Activated T-helper 2 cell treated with anti-CD3 and anti-CD28 coated beads, Interferon-gamma antibody, Interleukin-2, Interleukin-4, amounts not matched to agents 10 μg/mL and 5 μg/mL and 100 μg/mL, durations not matched to agents 14 hours and 24 hours and 36 hours (primary cell): ENCODE measurements at regions of chr2 and their contacts with region 1.

Region 1: GRCh38 chr2:19901442-19902215 is at the start of gene TTC32:
- DNase-seq: peak; percentile 90
- H3K4me3 Mint-ChIP-seq: peak within 1 kb of the TSS; percentile 89
- H3K27ac Mint-ChIP-seq: peak within 1 kb of the TSS; percentile 95
- H3K4me1 Mint-ChIP-seq: peaks cover 48% of the 10 kb centered on the region
- H3K27me3 Mint-ChIP-seq: peaks cover 2% of the 10 kb centered on the region
- total RNA-seq, gene TTC32: 14.8 TPM in 2 replicates

Region 2: DNA sequence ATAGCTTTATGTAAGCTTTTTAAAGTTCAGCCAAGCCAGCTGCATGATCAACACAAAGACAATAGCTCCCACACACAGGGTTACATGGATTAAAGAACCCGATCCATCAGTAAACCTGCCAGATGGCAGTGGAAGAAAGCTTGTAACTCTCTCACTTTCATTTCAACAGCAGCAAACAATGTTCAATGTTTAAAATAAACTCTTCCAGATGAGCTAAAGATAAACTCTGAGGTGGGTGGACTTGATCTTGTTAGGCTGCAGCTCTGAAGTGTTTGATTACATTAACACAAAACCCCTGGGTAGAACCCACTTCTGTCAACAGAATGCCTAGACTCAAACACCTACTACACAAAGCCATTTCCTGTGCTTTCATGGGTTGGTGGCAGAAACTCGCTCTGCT is 1355.1 kb before region 1 on chr2:
- intact Hi-C with region 1: loop called (anchors 5 kb)
- DNase-seq: no peak
- H3K4me3 Mint-ChIP-seq: no peak overlapping the region
- H3K27ac Mint-ChIP-seq: peak overlapping the region; percentile 76
- H3K4me1 Mint-ChIP-seq: peaks cover 33% of the 10 kb centered on the region
- H3K27me3 Mint-ChIP-seq: no peaks in the 10 kb centered on the region

Region 3: GRCh38 chr2:19347619-19348562 is 553.7 kb before region 1 on chr2:
- intact Hi-C with region 1: loop called (anchors 5 kb)
- DNase-seq: peak; percentile 97
- H3K4me3 Mint-ChIP-seq: peak overlapping the region; percentile 96
- H3K27ac Mint-ChIP-seq: peak overlapping the region; percentile 93
- H3K4me1 Mint-ChIP-seq: peaks cover 20% of the 10 kb centered on the region
- H3K27me3 Mint-ChIP-seq: peaks cover 33% of the 10 kb centered on the region

Region 4: DNA sequence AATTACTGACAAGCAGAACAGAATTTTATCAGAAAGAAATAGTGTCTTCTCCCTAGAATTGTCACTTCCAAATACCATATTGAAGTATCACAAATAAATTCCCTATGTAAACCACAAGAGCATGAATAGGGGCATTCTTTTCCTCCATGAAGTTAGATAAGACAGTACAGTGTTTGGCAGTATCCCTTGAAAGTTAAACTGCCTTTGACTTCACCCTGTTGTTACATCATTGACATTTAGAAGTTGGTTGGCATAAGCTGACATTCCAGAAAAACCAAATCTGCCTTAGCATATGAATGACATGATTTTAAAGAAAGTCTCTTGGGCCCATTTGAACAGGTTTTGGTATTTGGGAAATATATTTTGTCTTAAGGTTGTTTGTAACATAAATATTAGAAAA is 493.0 kb before region 1 on chr2:
- intact Hi-C with region 1: no loop called
- DNase-seq: no peak
- H3K4me3 Mint-ChIP-seq: no peak overlapping the region
- H3K27ac Mint-ChIP-seq: no peak overlapping the region
- H3K4me1 Mint-ChIP-seq: no peaks in the 10 kb centered on the region
- H3K27me3 Mint-ChIP-seq: no peaks in the 10 kb centered on the region

Region 5: DNA sequence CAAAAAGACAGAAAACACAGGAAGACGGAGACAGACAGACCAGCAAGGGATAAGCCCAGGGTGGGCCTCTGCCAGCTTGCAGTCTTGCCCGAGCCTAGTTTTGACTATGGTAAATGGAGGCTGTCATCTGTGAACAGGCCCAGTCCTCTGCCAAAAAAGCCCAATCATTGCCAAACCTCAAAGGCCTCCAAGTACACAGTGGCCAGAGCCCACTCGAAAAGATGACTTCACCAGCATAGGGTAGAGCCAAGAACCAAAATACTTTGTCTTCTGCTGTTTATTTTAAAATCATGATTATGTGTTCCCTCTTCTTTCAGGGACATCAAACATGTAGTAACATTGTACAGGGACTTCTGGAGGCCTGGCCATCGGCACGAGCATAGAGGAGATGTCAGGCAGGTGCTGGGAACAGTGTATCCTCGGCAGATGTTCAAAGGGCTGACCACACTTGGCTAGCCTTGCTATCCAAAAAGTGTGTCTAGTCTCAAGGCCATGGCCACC is 65.8 kb before region 1 on chr2:
- intact Hi-C with region 1: no loop called
- DNase-seq: no peak
- H3K4me3 Mint-ChIP-seq: no peak overlapping the region
- H3K27ac Mint-ChIP-seq: no peak overlapping the region
- H3K4me1 Mint-ChIP-seq: peaks cover 8% of the 10 kb centered on the region
- H3K27me3 Mint-ChIP-seq: no peaks in the 10 kb centered on the region

Region 6: GRCh38 chr2:20051532-20052228 is 150.1 kb after region 1 on chr2 and contains the start of gene LAPTM4A:
- intact Hi-C with region 1: loop called (anchors 1 kb)
- DNase-seq: peak; percentile 98
- H3K4me3 Mint-ChIP-seq: no peak within 1 kb of the TSS
- H3K27ac Mint-ChIP-seq: no peak within 1 kb of the TSS
- H3K4me1 Mint-ChIP-seq: peaks cover 23% of the 10 kb centered on the region
- H3K27me3 Mint-ChIP-seq: peaks cover 18% of the 10 kb centered on the region
- total RNA-seq, gene LAPTM4A: 26.9 and 27.3 TPM in 2 replicates

Region 7: GRCh38 chr2:20365249-20365817 is 463.7 kb after region 1 on chr2:
- intact Hi-C with region 1: loop called (anchors 5 kb)
- DNase-seq: peak; percentile 52
- H3K4me3 Mint-ChIP-seq: peak overlapping the region; percentile 9
- H3K27ac Mint-ChIP-seq: peak overlapping the region; percentile 51
- H3K4me1 Mint-ChIP-seq: peaks cover 25% of the 10 kb centered on the region
- H3K27me3 Mint-ChIP-seq: peaks cover 4% of the 10 kb centered on the region

Region 8: GRCh38 chr2:20650880-20651730 is 749.5 kb after region 1 on chr2 and contains the start of gene HS1BP3:
- intact Hi-C with region 1: loop called (anchors 5 kb)
- DNase-seq: peak; percentile 88
- H3K4me3 Mint-ChIP-seq: peak within 1 kb of the TSS; percentile 87
- H3K27ac Mint-ChIP-seq: peak within 1 kb of the TSS; percentile 85
- H3K4me1 Mint-ChIP-seq: peaks cover 15% of the 10 kb centered on the region
- H3K27me3 Mint-ChIP-seq: peaks cover 10% of the 10 kb centered on the region
- total RNA-seq, gene HS1BP3: 11.5 and 11.9 TPM in 2 replicates